ENCODE measurements at regions of chr2 and their contacts with region 1.

Region 1: DNA sequence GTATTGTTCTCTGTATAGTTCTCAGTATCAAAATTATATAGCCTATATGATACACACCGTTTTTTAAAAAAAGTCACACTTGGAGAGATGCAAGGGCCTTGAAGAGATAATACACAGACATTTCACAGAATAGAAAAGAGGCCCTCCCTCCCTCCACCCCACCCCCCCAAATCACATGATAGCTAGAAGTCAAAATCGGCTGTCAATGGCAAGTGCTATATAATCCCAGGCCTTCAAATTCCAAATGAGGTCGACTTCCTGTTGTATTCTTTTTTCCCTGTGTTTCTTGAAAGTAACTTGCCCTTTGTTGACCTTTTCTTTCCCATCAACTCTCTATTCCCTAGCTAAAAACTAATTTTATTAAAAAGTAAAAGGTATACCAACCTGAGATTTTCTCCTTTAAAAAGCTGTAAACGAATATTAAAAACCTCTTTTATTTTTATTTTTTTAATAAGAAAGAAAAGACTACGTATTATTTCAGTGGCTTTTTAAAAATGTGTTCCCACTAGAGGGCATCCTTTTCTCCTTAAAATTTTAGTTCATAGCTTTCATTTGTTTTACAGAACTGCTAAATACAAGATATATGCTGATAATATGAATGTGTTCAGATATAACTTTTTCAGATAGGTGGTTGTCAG is 46.6 kb downstream of the KCMF1 start:
- DNase-seq: peak in 4 of 5 donors; percentile 11 to 25 (median 22)
- H3K4me3 ChIP-seq: no peak overlapping the region
- H3K4me3 Mint-ChIP-seq: peak overlapping the region in 3 of 8 donors; percentile 8 to 45 (median 41)
- H3K27ac ChIP-seq: no peak overlapping the region
- H3K27ac Mint-ChIP-seq: peak overlapping the region; percentile 18 to 88 (median 67)
- H3K4me1 ChIP-seq: peaks cover 41% of the 10 kb centered on the region
- H3K4me1 Mint-ChIP-seq: peaks cover 48 to 70% (median 58%) of the 10 kb centered on the region in 4 donors
- H3K27me3 ChIP-seq: no peaks in the 10 kb centered on the region
- H3K27me3 Mint-ChIP-seq: no peaks in the 10 kb centered on the region

Region 2: GRCh38 chr2:84495539-84496146 is 521.9 kb before region 1 on chr2:
- CTCF ChIA-PET with region 1: interaction called, 9 read pairs
- POLR2A ChIA-PET with region 1: no interaction called
- intact Hi-C with region 1: loop called (anchors 1 kb)
- DNase-seq: peak; percentile 63 to 75 (median 71)
- H3K4me3 ChIP-seq: no peak overlapping the region
- H3K4me3 Mint-ChIP-seq: no peak overlapping the region
- H3K27ac ChIP-seq: no peak overlapping the region
- H3K27ac Mint-ChIP-seq: peak overlapping the region in 6 of 7 donors; percentile 39 to 84 (median 60)
- H3K4me1 ChIP-seq: peaks cover 8% of the 10 kb centered on the region
- H3K4me1 Mint-ChIP-seq: peaks cover 6 to 14% (median 7%) of the 10 kb centered on the region in 4 donors
- H3K27me3 ChIP-seq: no peaks in the 10 kb centered on the region
- H3K27me3 Mint-ChIP-seq: no peaks in the 10 kb centered on the region

Region 3: GRCh38 chr2:84946204-84947009 is 71.1 kb before region 1 on chr2:
- CTCF ChIA-PET with region 1: interaction called, 13 read pairs
- POLR2A ChIA-PET with region 1: interaction called, 3 read pairs
- intact Hi-C with region 1: no loop called
- DNase-seq: peak; percentile 47 to 84 (median 52)
- H3K4me3 ChIP-seq: peak overlapping the region in 1 of 2 donors; percentile 11
- H3K4me3 Mint-ChIP-seq: peak overlapping the region; percentile 27 to 84 (median 66)
- H3K27ac ChIP-seq: peak overlapping the region; percentile 33
- H3K27ac Mint-ChIP-seq: peak overlapping the region; percentile 76 to 97 (median 91)
- H3K4me1 ChIP-seq: peaks cover 23% of the 10 kb centered on the region
- H3K4me1 Mint-ChIP-seq: peaks cover 18 to 33% (median 25%) of the 10 kb centered on the region in 4 donors
- H3K27me3 ChIP-seq: no peaks in the 10 kb centered on the region
- H3K27me3 Mint-ChIP-seq: no peaks in the 10 kb centered on the region

Region 4: GRCh38 chr2:84970868-84971509 is 46.5 kb before region 1 on chr2 and contains the start of gene KCMF1:
- CTCF ChIA-PET with region 1: interaction called, 10 read pairs
- POLR2A ChIA-PET with region 1: interaction called, 4 read pairs
- intact Hi-C with region 1: loop called (anchors 2 kb)
- DNase-seq: peak; percentile 64 to 79 (median 71)
- H3K4me3 ChIP-seq: peak within 1 kb of the TSS; percentile 63 to 90
- H3K4me3 Mint-ChIP-seq: peak within 1 kb of the TSS; percentile 93 to 100 (median 99)
- H3K27ac ChIP-seq: peak within 1 kb of the TSS; percentile 93
- H3K27ac Mint-ChIP-seq: peak within 1 kb of the TSS; percentile 97 to 100 (median 99)
- H3K4me1 ChIP-seq: peaks cover 59% of the 10 kb centered on the region
- H3K4me1 Mint-ChIP-seq: peaks cover 41 to 73% (median 56%) of the 10 kb centered on the region in 4 donors
- H3K27me3 ChIP-seq: no peaks in the 10 kb centered on the region
- H3K27me3 Mint-ChIP-seq: peaks cover 0 to 2% of the 10 kb centered on the region in 2 donors
- total RNA-seq, gene KCMF1: 59.8 to 62.7 TPM

Region 5: GRCh38 chr2:85001595-85001994 is 15.9 kb before region 1 on chr2:
- CTCF ChIA-PET with region 1: interaction called, 17 read pairs
- POLR2A ChIA-PET with region 1: interaction called, 5 read pairs
- intact Hi-C with region 1: no loop called
- DNase-seq: peak in 1 of 5 donors; percentile 13
- H3K4me3 ChIP-seq: no peak overlapping the region
- H3K4me3 Mint-ChIP-seq: peak overlapping the region in 3 of 8 donors; percentile 23 to 29 (median 28)
- H3K27ac ChIP-seq: no peak overlapping the region
- H3K27ac Mint-ChIP-seq: peak overlapping the region in 6 of 7 donors; percentile 24 to 89 (median 70)
- H3K4me1 ChIP-seq: peaks cover 44% of the 10 kb centered on the region
- H3K4me1 Mint-ChIP-seq: peaks cover 36 to 66% (median 51%) of the 10 kb centered on the region in 4 donors
- H3K27me3 ChIP-seq: no peaks in the 10 kb centered on the region
- H3K27me3 Mint-ChIP-seq: no peaks in the 10 kb centered on the region

Region 6: GRCh38 chr2:85288244-85288725 is 270.8 kb after region 1 on chr2:
- CTCF ChIA-PET with region 1: interaction called, 4 read pairs
- POLR2A ChIA-PET with region 1: no interaction called
- intact Hi-C with region 1: loop called (anchors 1 kb)
- DNase-seq: no peak
- H3K4me3 ChIP-seq: no peak overlapping the region
- H3K4me3 Mint-ChIP-seq: no peak overlapping the region
- H3K27ac ChIP-seq: no peak overlapping the region
- H3K27ac Mint-ChIP-seq: no peak overlapping the region
- H3K4me1 ChIP-seq: peaks cover 10% of the 10 kb centered on the region
- H3K4me1 Mint-ChIP-seq: peaks cover 16 to 28% (median 23%) of the 10 kb centered on the region in 4 donors
- H3K27me3 ChIP-seq: no peaks in the 10 kb centered on the region
- H3K27me3 Mint-ChIP-seq: no peaks in the 10 kb centered on the region